WTC11 (cell line): ENCODE measurements at regions of chr15 and their contacts with region 1.

Region 1: GRCh38 chr15:89003865-89004725 is 84.2 kb upstream of the ABHD2 start:
- DNase-seq: peak; percentile 71
- ATAC-seq: peak; percentile 90
- H3K4me3 Mint-ChIP-seq: no peak overlapping the region
- H3K27ac Mint-ChIP-seq: peak overlapping the region; percentile 54; the same call in 1 of the 2 replicates
- H3K4me1 Mint-ChIP-seq: peaks cover 59% of the 10 kb centered on the region
- H3K27me3 Mint-ChIP-seq: no peaks in the 10 kb centered on the region; the same call in 1 of the 2 replicates
- CTCF ChIP-seq: 0 out of 2 replicates have a peak, but pooled peaks have one; percentile 23

Region 2: GRCh38 chr15:88865498-88866099 is 138.5 kb before region 1 on chr15:
- CTCF ChIA-PET with region 1: no interaction called
- POLR2A ChIA-PET with region 1: no interaction called
- DNase-seq: no peak
- ATAC-seq: no peak; the same call in 1 of the 2 replicates
- H3K4me3 Mint-ChIP-seq: no peak overlapping the region
- H3K27ac Mint-ChIP-seq: no peak overlapping the region
- H3K4me1 Mint-ChIP-seq: no peaks in the 10 kb centered on the region; the same call in 1 of the 2 replicates
- H3K27me3 Mint-ChIP-seq: peaks cover 9% of the 10 kb centered on the region
- CTCF ChIP-seq: no peak

Region 3: GRCh38 chr15:88897456-88898194 is 106.5 kb before region 1 on chr15:
- CTCF ChIA-PET with region 1: interaction called, 15 read pairs
- POLR2A ChIA-PET with region 1: interaction called, 3 read pairs
- DNase-seq: peak; percentile 53
- ATAC-seq: 0 out of 2 replicates have a peak, but pooled peaks have one; percentile 1
- H3K4me3 Mint-ChIP-seq: no peak overlapping the region; the same call in 1 of the 2 replicates
- H3K27ac Mint-ChIP-seq: peak overlapping the region; percentile 93
- H3K4me1 Mint-ChIP-seq: peaks cover 53% of the 10 kb centered on the region
- H3K27me3 Mint-ChIP-seq: 0 out of 2 replicates have a peak, but pooled peaks cover 2% of the 10 kb centered on the region
- CTCF ChIP-seq: no peak

Region 4: GRCh38 chr15:88913017-88913849 is 90.9 kb before region 1 on chr15 and contains the start of gene MFGE8:
- CTCF ChIA-PET with region 1: interaction called, 226 read pairs
- POLR2A ChIA-PET with region 1: interaction called, 17 read pairs
- DNase-seq: peak; percentile 92
- ATAC-seq: peak; percentile 89
- H3K4me3 Mint-ChIP-seq: peak within 1 kb of the TSS; percentile 85
- H3K27ac Mint-ChIP-seq: peak within 1 kb of the TSS; percentile 93
- H3K4me1 Mint-ChIP-seq: peaks cover 45% of the 10 kb centered on the region
- H3K27me3 Mint-ChIP-seq: no peaks in the 10 kb centered on the region
- CTCF ChIP-seq: no peak
- total RNA-seq, gene MFGE8: 719 to 847 TPM (median 814 TPM) in 3 replicates